GM12878 (cell line): ENCODE measurements at regions of chr1 and their contacts with region 1.

Region 1: DNA sequence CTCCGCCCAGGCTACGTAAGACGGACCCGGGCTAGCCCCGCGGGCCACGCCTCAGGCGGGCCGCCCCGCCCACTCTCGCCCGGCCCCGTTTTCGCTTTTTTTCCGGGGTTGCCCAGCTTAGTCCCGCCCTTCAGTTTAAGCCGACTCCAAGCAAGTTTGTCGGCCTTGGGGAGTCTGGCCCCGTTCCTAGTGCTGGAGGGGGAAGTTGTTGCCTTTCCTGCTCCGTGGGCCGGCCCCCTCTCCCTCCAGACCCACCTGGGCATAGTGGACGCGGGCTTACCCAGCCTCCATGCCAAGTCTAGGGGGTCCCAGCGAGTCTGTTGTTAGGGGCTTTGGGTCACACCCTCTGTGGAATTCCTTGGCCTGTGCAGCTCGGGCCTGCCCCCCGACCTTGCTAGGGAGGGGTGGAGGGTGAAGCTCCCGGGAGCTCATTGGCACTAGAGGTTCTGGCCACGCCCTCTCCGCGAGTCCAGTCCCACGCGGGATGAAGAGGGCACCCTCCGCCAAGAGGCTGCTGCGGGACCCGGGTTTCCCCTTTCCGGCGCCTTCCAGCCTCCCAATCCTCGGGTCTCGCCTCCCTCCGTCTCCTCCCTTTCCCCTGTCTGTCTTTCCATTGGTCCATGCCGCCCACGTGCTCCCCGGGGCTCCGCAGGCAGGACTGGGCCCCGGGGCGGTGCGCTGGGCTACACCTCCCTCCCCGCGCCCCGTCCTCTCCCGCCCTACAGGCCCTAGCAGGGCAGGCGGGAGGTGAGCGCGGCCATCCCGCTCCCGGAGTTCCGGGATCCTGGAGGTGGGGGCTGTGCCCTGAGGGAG is 3.3 kb downstream of the RUSC1 start:
- DNase-seq: peak; percentile 84
- ATAC-seq: peak; percentile 87
- H3K4me3 ChIP-seq: peak overlapping the region; percentile 88
- H3K27ac ChIP-seq: peak overlapping the region; percentile 66
- H3K4me1 ChIP-seq: peaks cover 7% of the 10 kb centered on the region
- H3K27me3 ChIP-seq: no peaks in the 10 kb centered on the region
- CTCF ChIP-seq: 0 out of 6 replicates have a peak, but pooled peaks of 1 of the 3 experiments have one; percentile 3
- EP300 ChIP-seq: 0 out of 4 replicates have a peak, but pooled peaks of 1 of the 2 experiments have one; percentile 15
- POLR2A ChIP-seq: peak; percentile 74
- RAD21 ChIP-seq: no peak

Region 2: DNA sequence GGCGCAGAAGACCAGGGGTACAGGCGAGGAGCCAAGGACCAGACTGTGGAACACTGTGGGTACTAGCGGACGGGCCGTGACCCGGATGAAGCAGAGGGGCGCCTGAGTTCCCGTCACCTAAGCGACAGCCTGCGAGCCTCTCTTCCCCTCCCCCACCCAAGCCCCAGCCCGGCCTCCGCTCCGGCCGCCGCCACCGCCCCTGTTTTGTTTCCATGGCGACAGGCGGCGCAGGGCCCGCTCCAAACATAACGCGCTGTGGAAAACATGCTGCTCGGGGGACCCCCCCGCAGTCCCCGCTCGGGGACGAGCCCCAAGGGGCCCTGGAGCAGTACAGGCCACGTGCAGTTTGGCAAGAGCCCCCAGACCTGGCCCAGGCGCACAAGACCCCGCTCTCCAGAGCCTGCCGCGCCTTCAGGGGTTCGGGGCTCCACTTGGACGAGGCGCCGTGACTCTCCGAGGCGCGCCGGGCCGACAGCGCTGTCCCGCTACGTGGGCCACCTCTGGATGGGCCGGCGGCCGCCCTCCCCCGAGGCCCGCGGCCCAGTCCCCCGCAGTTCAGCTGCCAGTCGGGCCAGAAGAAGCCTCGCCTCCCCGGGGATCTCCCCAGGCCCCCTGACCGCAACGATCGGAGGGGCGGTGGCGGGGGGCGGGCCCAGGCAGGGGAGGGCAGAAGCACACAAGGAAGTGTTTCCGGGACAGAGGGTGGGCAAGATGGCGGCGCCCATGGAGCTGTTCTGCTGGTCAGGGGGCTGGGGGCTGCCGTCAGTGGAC is 115.3 kb before region 1 on chr1 and contains the start of gene MTX1:
- CTCF ChIA-PET with region 1: interaction called, 4 read pairs
- POLR2A ChIA-PET with region 1: interaction called, 7 read pairs
- RAD21 ChIA-PET with region 1: interaction called, 7 read pairs
- SMC1A ChIA-PET with region 1: no interaction called
- in situ Hi-C with region 1: no loop called
- intact Hi-C with region 1: loop called (anchors 2 kb)
- DNase-seq: no peak
- ATAC-seq: peak; percentile 93
- H3K4me3 ChIP-seq: peak within 1 kb of the TSS; percentile 98
- H3K27ac ChIP-seq: peak within 1 kb of the TSS; percentile 81
- H3K4me1 ChIP-seq: peaks cover 19% of the 10 kb centered on the region
- H3K27me3 ChIP-seq: no peaks in the 10 kb centered on the region
- CTCF ChIP-seq: no peak
- EP300 ChIP-seq: peak in 1 of 2 experiments; percentile 58; a peak in 1 of 4 replicates
- POLR2A ChIP-seq: peak; percentile 92
- RAD21 ChIP-seq: no peak
- polyA plus RNA-seq, gene MTX1: 15.8 to 25.5 TPM

Region 3: GRCh38 chr1:155261852-155262673 is 61.9 kb before region 1 on chr1 and contains the start of gene SCAMP3:
- CTCF ChIA-PET with region 1: interaction called, 225 read pairs
- POLR2A ChIA-PET with region 1: interaction called, 4 read pairs
- RAD21 ChIA-PET with region 1: interaction called, 3 read pairs
- SMC1A ChIA-PET with region 1: interaction called, 4 read pairs
- in situ Hi-C with region 1: no loop called
- intact Hi-C with region 1: no loop called
- DNase-seq: peak; percentile 96
- ATAC-seq: peak; percentile 98
- H3K4me3 ChIP-seq: peak within 1 kb of the TSS; percentile 77
- H3K27ac ChIP-seq: peak within 1 kb of the TSS; percentile 84
- H3K4me1 ChIP-seq: peaks cover 7% of the 10 kb centered on the region
- H3K27me3 ChIP-seq: no peaks in the 10 kb centered on the region
- CTCF ChIP-seq: no peak
- EP300 ChIP-seq: no peak
- POLR2A ChIP-seq: peak; percentile 94
- RAD21 ChIP-seq: no peak
- polyA plus RNA-seq, gene SCAMP3: 55.1 to 84.1 TPM

Region 4: DNA sequence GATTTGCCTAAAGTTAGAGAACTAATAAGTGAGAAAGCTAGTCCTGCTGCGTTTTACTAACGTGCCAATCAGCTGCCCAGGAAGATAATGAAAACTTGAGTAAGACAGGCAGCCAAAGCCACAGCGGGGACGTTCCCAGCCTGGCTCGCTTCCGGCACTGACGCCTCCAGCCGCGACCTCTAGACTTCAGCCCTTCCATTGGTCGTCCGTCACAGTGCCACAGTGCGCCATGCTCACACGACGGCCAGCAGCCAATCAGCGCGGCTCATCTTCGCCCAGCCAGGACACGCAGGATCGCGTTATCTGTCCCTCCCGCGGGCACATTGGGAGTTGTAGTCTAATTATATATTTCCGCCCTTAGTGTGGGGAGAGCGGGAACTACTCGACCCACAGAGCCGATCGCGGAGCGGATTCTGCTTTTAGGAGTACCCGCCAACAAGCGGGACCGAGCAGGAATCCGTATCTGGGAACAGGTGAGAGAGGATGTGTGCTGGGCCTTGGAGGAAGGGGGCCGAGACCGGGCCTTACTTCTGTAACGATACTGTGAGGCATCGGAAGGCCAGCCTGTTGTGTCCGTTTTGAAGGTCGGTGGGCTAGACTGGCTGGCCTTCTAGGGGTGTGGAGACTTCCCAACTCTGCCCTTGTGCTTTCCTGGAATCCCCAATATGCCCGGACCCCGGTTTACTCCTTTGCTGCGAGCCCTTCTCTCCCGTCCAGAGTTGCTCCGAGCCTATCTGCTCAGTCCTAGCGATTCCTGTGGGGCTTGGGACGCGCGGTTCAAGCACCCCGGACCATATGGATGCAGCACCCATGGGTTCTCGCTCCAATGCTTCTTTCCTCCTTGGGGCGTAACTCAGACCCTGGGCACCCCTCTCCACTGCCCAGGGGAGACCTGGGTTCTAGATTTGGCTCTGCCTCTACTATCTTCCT is 15.2 kb before region 1 on chr1 and contains the start of gene FDPS:
- CTCF ChIA-PET with region 1: interaction called, 37 read pairs
- POLR2A ChIA-PET with region 1: interaction called, 11 read pairs
- RAD21 ChIA-PET with region 1: interaction called, 16 read pairs
- SMC1A ChIA-PET with region 1: interaction called, 14 read pairs
- in situ Hi-C with region 1: no loop called
- intact Hi-C with region 1: no loop called
- DNase-seq: peak; percentile 99
- ATAC-seq: peak; percentile 95
- H3K4me3 ChIP-seq: peak within 1 kb of the TSS; percentile 96
- H3K27ac ChIP-seq: peak within 1 kb of the TSS; percentile 99
- H3K4me1 ChIP-seq: peaks cover 14% of the 10 kb centered on the region
- H3K27me3 ChIP-seq: no peaks in the 10 kb centered on the region
- CTCF ChIP-seq: no peak
- EP300 ChIP-seq: 0 out of 4 replicates have a peak, but pooled peaks of 1 of the 2 experiments have one; percentile 48
- POLR2A ChIP-seq: peak; percentile 84
- RAD21 ChIP-seq: no peak
- polyA plus RNA-seq, gene FDPS: 1,058 to 1,156 TPM

Region 5: GRCh38 chr1:155591770-155592169 is 267.8 kb after region 1 on chr1:
- CTCF ChIA-PET with region 1: interaction called, 7 read pairs
- POLR2A ChIA-PET with region 1: no interaction called
- RAD21 ChIA-PET with region 1: interaction called, 5 read pairs
- SMC1A ChIA-PET with region 1: no interaction called
- in situ Hi-C with region 1: no loop called
- intact Hi-C with region 1: loop called (anchors 5 kb)
- DNase-seq: peak; percentile 24
- ATAC-seq: peak; percentile 79
- H3K4me3 ChIP-seq: no peak overlapping the region
- H3K27ac ChIP-seq: no peak overlapping the region
- H3K4me1 ChIP-seq: no peaks in the 10 kb centered on the region
- H3K27me3 ChIP-seq: no peaks in the 10 kb centered on the region
- CTCF ChIP-seq: peak; percentile 43 to 60 (median 50); a peak in 5 of 6 replicates
- EP300 ChIP-seq: no peak
- POLR2A ChIP-seq: no peak
- RAD21 ChIP-seq: peak; percentile 72